Spleen (tissue), 13 donors: ENCODE measurements at regions of chr18 and their contacts with region 1.

Region 1: DNA sequence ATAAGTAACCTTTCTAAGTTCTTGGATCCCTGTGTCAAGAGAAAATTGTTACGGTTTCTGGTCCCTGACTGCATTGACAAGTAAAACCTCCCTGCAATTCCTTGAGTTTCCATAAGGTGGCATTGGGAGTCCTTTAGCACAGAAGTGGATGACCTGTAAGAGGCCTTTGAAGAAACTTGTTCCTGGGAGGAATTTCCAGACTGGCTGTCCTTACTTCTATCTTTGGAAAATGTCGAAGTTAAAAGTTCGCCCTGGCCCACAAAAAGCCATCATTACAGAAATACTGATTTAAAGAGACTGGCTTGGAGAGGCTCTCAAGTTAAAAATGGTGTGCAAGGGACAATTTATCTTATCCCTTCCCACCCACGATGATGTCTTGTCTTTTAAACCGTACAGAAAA is 218.4 kb downstream of the CDH20 start:
- DNase-seq: no peak
- H3K4me3 ChIP-seq: no peak overlapping the region
- H3K27ac ChIP-seq: no peak overlapping the region
- H3K4me1 ChIP-seq: peaks cover 0 to 2% (median 0%) of the 10 kb centered on the region in 6 donors
- H3K27me3 ChIP-seq: peaks cover 0 to 6% (median 0%) of the 10 kb centered on the region in 7 donors
- CTCF ChIP-seq: peak; percentile 18 to 81 (median 63)
- POLR2A ChIP-seq: no peak

Region 2: DNA sequence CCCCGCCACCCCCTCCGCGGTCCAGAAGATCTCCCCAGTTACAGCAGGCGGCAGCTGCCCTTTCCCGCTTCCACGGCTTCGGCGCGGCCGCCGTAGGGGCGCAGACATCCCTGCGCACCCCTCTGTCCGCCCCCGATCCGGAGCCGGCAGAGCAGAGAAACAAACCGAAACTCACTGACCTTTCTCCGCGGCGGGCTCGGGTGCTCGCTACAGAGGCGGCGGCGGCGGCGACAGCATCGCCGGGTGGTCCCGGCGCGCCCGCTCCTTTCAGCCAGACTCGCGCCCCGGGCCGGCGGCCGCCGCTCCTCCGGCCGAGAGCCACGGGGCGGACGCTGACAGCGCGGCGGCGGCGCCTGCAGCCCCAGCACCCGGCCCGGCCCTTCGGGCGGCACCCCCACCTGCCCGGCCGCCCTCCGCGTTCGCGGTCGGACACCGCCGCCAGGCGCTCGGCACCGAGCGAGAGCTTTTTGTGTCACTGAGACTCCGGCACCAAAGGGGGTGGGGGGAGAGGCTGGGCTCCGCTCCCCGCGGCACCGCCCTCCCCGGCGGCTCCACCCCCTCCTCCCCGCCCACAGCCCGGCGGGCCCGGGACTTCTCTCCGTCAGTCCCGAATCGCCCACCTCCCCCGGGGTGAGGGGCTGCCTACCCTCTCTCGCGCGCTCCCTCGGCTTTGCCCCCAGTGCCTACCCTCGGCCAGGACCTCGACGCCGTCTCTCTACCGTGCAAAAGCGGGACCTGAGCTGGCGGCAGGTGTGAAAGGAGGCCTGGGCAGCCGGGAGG is 342.6 kb after region 1 on chr18:
- intact Hi-C with region 1: loop called (anchors 10 kb)
- DNase-seq: peak; percentile 87
- H3K4me3 ChIP-seq: peak overlapping the region; percentile 60 to 90 (median 74)
- H3K27ac ChIP-seq: peak overlapping the region in 5 of 8 donors; percentile 7 to 52 (median 24)
- H3K4me1 ChIP-seq: peaks cover 2 to 34% (median 24%) of the 10 kb centered on the region in 6 donors
- H3K27me3 ChIP-seq: peaks cover 0 to 83% (median 30%) of the 10 kb centered on the region in 7 donors
- CTCF ChIP-seq: peak in 1 of 11 experiments; percentile 9
- POLR2A ChIP-seq: no peak